ENCODE measurements at regions of chr18 and their contacts with region 1.

Region 1: DNA sequence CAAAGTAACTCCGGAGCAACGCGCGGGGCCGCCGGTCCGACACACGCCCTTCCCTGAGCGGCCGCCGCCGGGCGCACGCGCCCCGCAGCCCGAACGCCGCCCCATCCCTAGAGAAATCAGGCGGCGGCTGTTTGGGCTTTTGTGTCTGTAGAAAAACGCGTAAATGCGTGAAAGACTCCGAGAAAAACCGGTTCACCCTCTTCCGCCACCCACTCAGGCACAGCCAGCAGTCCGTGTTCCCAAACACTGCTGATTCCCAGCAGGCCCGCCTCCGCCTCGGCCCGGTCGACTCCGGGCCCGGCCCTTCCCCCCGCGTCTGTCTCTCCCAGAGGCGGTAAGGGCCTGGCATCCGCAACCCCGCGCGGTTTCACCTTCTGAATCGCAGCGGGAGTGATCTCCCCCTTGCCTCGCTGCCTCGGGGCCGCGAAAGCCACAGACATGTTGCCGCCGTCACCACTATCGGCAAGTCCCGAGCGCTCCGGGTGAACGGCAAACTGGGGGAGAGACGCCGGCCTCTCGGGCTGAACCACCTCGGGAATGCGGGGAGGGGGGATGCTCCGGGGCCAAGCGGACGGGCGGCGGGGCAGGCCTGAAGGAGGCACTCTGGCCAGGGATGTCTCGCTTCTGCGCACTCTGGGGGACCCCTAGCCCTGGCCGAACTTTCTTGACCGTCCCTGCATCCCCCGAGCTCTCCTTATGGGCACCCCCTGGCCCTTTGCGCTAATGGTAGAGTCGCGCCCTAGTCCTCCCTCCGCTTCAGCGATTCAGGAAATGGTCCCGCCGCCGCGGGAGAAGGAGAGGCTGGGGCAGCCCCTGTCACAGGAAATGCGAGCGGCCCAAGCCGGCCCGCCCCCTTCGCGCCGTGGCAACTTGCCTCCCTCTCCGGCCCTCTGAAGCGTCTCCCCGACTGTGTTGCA is at the start of gene SS18:
- DNase-seq: peak; percentile 95
- H3K4me3 Mint-ChIP-seq: peak within 1 kb of the TSS; percentile 93
- H3K27ac Mint-ChIP-seq: peak within 1 kb of the TSS; percentile 98
- H3K4me1 Mint-ChIP-seq: peaks cover 32% of the 10 kb centered on the region
- H3K27me3 Mint-ChIP-seq: no peaks in the 10 kb centered on the region
- total RNA-seq, gene SS18: 42.2 to 42.9 TPM

Region 2: DNA sequence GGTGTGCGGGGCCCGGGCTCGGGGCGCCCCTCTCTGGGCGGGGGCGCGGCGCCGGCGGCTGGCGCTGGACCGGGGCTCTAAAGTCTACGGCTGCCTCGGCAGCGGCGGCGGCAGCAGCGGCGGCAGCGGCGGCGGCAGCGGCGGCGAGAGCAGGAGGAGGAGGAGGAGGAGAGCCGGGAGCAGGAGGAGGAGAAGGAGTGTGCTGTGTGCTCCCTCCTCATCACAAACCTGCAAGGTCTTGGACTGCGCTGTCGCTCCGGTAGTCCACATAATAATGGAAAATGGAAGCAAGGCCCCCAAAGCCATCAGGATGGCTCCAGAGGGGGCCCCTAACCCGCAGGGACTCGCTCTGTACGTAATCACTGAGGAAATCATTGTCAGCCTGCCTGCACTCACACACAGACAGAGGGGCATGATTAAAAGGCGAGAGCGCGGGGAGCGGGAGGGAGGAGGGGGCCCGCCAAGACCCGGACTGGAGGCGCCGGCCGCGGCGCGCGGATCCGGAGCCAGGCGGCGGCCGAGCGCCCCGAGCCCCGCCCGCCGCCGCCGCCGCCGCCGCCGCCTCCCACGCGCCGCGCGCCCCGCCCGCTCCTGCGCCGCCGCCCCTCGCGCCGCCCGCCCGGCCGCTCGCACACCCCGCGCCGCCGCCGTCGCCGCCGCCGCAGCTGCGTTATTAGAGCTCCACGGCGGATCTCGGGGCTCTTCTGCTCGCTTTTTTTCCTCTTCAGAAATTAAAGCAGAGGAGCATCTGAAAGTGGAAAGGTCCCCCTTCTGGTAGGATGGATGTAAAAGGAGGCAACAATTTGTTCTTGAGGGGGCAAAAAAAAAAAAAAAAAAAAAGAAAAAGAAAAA is 738.4 kb before region 1 on chr18 and contains the start of gene ZNF521:
- CTCF ChIA-PET with region 1: no interaction called
- intact Hi-C with region 1: loop called (anchors 5 kb)
- DNase-seq: peak; percentile 46
- H3K4me3 Mint-ChIP-seq: peak within 1 kb of the TSS; percentile 72
- H3K27ac Mint-ChIP-seq: no peak within 1 kb of the TSS
- H3K4me1 Mint-ChIP-seq: peaks cover 12% of the 10 kb centered on the region
- H3K27me3 Mint-ChIP-seq: peaks cover 51% of the 10 kb centered on the region
- total RNA-seq, gene ZNF521: not detected

Region 3: DNA sequence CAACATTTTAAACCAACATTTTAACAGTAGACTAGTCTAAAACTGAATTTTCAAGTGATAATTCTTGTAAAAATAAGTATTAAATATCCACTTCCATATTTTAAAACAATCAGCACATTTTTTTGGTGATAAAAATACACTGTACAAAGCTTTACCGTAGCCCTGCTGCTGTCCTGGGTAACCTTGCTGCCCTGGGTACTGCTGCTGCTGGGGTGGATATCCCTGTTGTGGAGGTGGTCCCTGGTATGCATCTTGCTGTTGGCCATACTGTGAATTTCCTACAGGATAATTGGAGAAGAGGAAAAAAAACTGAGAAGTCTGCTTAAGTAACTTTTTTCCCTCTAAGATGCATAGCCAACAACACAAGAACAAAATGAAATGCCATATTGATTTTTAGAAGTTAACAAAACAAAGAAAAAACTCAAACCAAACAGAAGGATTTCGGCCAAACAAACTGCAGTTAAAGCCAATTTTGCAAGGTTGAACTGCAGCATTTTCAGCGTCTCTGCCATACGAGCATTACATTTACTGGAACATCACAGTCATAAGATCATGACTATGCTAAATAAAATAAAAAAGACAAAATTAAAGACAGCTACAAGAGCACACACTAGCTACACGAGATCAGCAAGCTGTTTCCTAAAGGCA is 55.4 kb before region 1 on chr18:
- CTCF ChIA-PET with region 1: no interaction called
- intact Hi-C with region 1: loop called (anchors 5 kb)
- DNase-seq: no peak
- H3K4me3 Mint-ChIP-seq: no peak overlapping the region
- H3K27ac Mint-ChIP-seq: no peak overlapping the region
- H3K4me1 Mint-ChIP-seq: peaks cover 2% of the 10 kb centered on the region
- H3K27me3 Mint-ChIP-seq: no peaks in the 10 kb centered on the region

Region 4: DNA sequence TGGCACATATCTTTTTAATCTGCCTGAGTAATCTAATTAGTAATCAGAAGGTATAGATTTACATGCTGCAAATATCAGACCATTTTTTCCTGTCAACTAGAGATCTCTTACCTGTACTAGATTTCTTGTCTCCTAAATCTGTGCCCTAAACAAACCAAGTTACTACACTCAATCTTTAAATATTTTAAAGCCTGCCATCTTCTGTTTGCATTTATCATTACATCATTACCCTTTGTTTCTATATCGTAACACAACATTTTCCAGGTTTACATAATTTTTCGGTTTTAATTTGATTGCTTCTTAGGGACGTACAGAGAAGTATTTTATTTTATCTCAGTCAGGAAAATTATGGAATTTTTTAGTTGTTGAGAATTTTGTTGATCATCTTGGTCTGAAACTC is 69.0 kb after region 1 on chr18:
- CTCF ChIA-PET with region 1: no interaction called
- intact Hi-C with region 1: loop called (anchors 2 kb)
- DNase-seq: no peak
- H3K4me3 Mint-ChIP-seq: no peak overlapping the region
- H3K27ac Mint-ChIP-seq: no peak overlapping the region
- H3K4me1 Mint-ChIP-seq: peaks cover 2% of the 10 kb centered on the region
- H3K27me3 Mint-ChIP-seq: no peaks in the 10 kb centered on the region

Region 5: DNA sequence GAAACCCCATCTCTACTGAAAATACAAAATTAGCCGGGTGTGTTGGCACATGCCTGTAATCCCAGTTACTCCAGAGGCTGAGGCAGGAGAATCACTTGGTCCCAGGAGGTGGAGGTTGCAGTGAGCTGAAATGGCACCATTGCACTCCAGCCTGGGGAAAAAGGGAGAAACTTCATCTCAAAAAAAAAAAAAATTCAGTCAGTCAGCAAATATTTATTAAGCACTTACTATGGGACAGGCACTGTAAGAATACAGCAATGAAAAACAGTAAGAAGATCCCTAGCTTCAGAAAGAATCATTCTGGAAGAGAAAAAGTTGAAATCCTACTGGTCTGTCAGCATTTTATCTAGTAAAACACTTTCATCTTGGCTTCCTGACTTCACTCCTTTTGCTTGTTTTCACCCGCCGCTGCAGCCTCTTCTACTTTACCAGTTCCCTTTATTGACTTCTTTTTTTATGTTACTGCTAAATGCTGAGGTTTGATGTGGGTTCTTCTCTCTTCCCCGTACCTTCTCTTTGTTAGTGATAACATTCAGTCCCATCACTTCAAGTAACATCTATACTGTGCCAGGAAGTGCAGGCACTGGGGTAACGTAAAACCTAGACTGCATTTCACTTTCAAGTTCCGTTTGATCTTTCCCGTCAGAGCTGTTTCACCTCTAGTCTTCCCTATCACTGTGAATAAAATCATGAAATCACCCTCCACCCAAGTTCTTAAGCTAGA is 125.0 kb after region 1 on chr18:
- CTCF ChIA-PET with region 1: interaction called, 4 read pairs
- intact Hi-C with region 1: loop called (anchors 1 kb)
- DNase-seq: peak; percentile 82
- H3K4me3 Mint-ChIP-seq: peak overlapping the region; percentile 44
- H3K27ac Mint-ChIP-seq: peak overlapping the region; percentile 88
- H3K4me1 Mint-ChIP-seq: peaks cover 33% of the 10 kb centered on the region
- H3K27me3 Mint-ChIP-seq: no peaks in the 10 kb centered on the region

Region 6: GRCh38 chr18:26307189-26307773 is 216.9 kb after region 1 on chr18:
- CTCF ChIA-PET with region 1: no interaction called
- intact Hi-C with region 1: loop called (anchors 5 kb)
- DNase-seq: peak; percentile 23
- H3K4me3 Mint-ChIP-seq: no peak overlapping the region
- H3K27ac Mint-ChIP-seq: no peak overlapping the region
- H3K4me1 Mint-ChIP-seq: peaks cover 3% of the 10 kb centered on the region
- H3K27me3 Mint-ChIP-seq: no peaks in the 10 kb centered on the region

Region 7: DNA sequence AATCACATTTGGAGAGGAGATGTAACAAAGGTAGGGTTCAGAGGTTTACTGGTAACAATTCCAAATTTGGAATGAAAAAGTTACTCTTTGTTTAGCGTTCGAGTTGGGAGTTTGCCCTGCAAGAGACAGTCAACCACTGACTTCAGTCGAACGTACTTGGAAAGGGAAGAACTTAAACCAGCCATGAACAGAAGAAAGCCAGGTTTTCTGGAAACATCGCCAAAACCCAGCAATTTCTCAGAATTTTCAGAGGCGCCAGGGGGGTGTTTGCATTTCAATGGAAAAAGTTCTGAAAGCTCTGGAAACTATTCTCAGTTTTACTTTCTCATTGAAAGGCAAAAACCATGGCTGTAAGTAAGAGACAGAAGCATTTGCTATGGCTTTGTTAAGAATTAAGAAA is 803.6 kb after region 1 on chr18:
- CTCF ChIA-PET with region 1: no interaction called
- intact Hi-C with region 1: no loop called
- DNase-seq: no peak
- H3K4me3 Mint-ChIP-seq: no peak overlapping the region
- H3K27ac Mint-ChIP-seq: no peak overlapping the region
- H3K4me1 Mint-ChIP-seq: no peaks in the 10 kb centered on the region
- H3K27me3 Mint-ChIP-seq: no peaks in the 10 kb centered on the region

Measured in activated naive CD4-positive, alpha-beta T cell treated with anti-CD3 and anti-CD28 coated beads for 36 hours (primary cell).